Sciatic nerve (tissue), 2 donors: ENCODE measurements at regions of chr1 and their contacts with region 1.

Region 1: DNA sequence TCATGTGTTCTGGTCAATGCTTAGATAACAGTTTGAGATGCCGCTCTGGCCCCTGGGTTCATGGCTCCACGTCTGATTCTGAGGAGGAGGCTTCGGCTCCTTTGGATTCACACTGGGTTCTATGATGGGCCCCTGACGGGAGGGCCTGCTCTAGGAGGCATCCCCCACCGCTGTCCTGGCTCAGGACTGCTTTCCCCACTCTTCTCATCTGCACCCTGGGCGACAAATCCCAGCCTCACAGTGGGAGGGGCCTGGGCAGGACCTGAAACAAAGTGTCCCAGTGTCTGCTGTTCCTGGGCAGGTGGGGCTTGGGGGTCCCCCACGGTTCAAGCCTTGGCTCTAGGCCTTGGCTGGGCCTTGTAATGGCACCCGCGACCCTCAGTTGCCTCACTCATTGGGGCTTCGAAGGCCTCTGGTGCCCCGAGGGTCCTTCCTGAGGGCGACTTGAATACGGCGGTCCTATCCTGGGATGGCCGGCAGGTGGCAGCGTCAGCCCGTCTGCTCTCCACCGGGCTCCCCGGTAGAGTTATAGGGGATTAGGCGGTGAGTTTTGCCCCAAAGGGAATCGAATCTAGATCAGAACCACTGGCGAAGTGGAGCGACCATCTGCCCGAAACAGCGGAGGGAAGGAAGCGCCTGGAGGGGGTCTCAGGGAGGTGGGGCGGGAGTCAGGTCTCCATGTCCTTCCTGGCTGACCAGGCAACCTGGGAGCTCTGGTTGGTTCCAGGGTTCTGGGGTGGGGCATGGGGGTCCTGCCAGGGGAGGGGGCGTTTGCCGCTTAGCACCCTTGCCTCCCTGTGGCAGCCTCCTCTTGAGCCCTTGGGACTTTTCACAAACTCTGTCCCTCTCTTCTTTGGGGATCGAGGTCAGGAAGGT is 2.0 kb upstream of the PEX10 start:
- DNase-seq: peak; percentile 88
- ATAC-seq: peak; percentile 55

Region 2: GRCh38 chr1:2534687-2535441 is 120.5 kb after region 1 on chr1:
- intact Hi-C with region 1: no loop called
- DNase-seq: no peak
- ATAC-seq: no peak

Region 3: GRCh38 chr1:2545759-2546514 is 131.6 kb after region 1 on chr1:
- intact Hi-C with region 1: loop called (anchors 2 kb)
- DNase-seq: peak; percentile 92
- ATAC-seq: peak; percentile 65

Region 4: GRCh38 chr1:2786329-2787162 is 372.2 kb after region 1 on chr1:
- intact Hi-C with region 1: loop called (anchors 5 kb)
- DNase-seq: peak; percentile 74
- ATAC-seq: no peak